Activated naive CD4-positive, alpha-beta T cell treated with anti-CD3 and anti-CD28 coated beads for 36 hours (primary cell): ENCODE measurements at regions of chr1 and their contacts with region 1.

Region 1: DNA sequence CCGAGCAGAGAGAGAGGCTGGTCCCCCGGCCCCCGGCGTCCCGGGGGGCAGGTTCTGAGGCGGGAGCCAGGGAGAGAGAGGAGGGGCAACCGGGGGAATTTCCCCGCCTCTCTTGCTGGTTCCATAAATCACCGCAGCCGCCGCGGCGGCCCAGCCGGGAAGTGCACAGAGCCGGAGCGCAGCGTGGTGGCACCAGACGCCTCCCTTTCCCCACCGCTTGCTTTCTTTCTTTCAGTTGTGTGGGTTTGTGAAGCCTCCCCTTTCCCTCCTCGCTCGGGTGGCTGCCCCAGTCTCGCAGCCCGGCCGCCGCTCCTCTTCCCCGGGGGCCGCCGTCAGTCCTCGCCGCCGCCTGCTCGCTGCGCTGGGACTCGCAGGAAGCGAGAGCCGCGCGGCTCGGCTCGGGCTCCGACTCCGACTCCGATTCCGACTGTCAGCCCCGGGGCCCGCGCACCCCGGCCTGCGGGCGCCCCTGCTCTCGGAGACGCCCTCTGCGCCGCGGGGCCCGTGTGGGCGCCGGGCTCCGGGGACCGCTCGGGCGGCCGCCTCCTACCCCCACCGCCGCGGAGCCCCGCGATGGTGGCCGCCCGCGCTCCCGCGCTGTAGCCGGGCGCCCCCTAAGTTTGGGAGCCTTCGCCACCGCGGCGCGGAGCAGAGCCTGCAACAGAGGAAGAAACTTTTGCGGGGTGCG is at the start of gene CACHD1:
- DNase-seq: peak; percentile 86
- H3K4me3 Mint-ChIP-seq: peak within 1 kb of the TSS; percentile 78
- H3K27ac Mint-ChIP-seq: peak within 1 kb of the TSS; percentile 3
- H3K4me1 Mint-ChIP-seq: peaks cover 14% of the 10 kb centered on the region
- H3K27me3 Mint-ChIP-seq: peaks cover 27% of the 10 kb centered on the region
- total RNA-seq, gene CACHD1: 2.6 to 2.9 TPM

Region 2: GRCh38 chr1:64487061-64487460 is 16.9 kb after region 1 on chr1:
- CTCF ChIA-PET with region 1: no interaction called
- intact Hi-C with region 1: loop called (anchors 2 kb)
- DNase-seq: peak; percentile 21
- H3K4me3 Mint-ChIP-seq: no peak overlapping the region
- H3K27ac Mint-ChIP-seq: no peak overlapping the region
- H3K4me1 Mint-ChIP-seq: peaks cover 28% of the 10 kb centered on the region
- H3K27me3 Mint-ChIP-seq: peaks cover 2% of the 10 kb centered on the region

Region 3: DNA sequence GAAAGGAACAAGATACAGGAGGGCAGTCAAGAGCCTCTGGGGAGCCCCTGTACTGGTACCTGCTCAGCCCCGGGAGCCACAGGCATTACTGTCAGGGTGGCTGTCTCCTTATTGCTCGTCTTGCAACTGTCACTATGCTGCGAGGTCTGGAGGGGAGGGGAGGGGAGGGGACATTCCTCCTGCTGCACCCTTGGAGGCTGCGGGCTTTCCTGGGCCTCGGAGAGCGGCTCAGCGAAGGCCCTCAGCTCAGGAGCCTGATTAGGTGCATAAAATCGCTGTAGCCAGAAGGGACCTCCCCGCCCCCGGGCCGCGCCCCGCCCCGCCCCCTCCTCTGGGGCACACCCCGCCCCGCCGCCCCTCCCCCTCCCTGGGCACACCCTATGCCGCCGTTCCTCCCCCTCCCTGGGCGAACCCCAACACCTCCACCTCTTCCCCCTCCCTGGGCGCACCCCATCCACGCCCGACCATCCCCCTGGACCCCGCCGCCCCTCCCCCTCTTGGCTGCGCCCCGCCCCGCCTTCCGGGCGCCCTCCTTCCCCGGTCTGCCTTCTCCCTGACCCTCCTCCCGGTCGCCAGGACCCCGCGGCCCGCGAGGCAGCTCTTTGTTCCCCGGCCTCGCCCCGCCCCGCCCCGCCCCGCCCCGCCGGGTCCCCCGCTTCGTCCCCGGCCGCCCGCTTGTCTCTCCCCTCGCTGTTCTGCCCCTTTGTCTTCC is 35.3 kb after region 1 on chr1:
- CTCF ChIA-PET with region 1: no interaction called
- intact Hi-C with region 1: loop called (anchors 1 kb)
- DNase-seq: peak; percentile 77
- H3K4me3 Mint-ChIP-seq: peak overlapping the region; percentile 88
- H3K27ac Mint-ChIP-seq: peak overlapping the region; percentile 77
- H3K4me1 Mint-ChIP-seq: peaks cover 29% of the 10 kb centered on the region
- H3K27me3 Mint-ChIP-seq: no peaks in the 10 kb centered on the region

Region 4: GRCh38 chr1:64539781-64540218 is 69.7 kb after region 1 on chr1:
- CTCF ChIA-PET with region 1: no interaction called
- intact Hi-C with region 1: loop called (anchors 1 kb)
- DNase-seq: peak; percentile 31
- H3K4me3 Mint-ChIP-seq: peak overlapping the region; percentile 47
- H3K27ac Mint-ChIP-seq: no peak overlapping the region
- H3K4me1 Mint-ChIP-seq: peaks cover 55% of the 10 kb centered on the region
- H3K27me3 Mint-ChIP-seq: no peaks in the 10 kb centered on the region

Region 5: DNA sequence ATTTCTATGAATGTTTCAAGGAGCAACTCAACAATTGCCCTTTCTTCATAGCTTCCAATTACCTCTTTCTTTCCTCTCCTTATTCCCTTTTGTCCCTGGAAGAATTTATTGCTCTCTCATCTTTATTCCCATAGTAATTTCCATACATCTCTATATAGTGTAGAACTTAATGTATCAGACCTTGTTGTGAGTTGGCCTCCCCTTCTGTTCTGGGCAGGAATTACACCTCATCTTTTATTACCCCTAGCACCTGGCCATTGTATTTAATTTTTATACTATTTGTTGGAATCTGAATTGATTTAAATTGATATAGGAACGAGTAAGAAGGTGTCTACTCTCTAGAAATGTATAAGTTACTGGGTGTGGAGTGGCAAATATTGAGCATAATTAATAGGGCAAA is 114.4 kb after region 1 on chr1:
- CTCF ChIA-PET with region 1: no interaction called
- intact Hi-C with region 1: loop called (anchors 1 kb)
- DNase-seq: no peak
- H3K4me3 Mint-ChIP-seq: no peak overlapping the region
- H3K27ac Mint-ChIP-seq: no peak overlapping the region
- H3K4me1 Mint-ChIP-seq: peaks cover 12% of the 10 kb centered on the region
- H3K27me3 Mint-ChIP-seq: no peaks in the 10 kb centered on the region

Region 6: DNA sequence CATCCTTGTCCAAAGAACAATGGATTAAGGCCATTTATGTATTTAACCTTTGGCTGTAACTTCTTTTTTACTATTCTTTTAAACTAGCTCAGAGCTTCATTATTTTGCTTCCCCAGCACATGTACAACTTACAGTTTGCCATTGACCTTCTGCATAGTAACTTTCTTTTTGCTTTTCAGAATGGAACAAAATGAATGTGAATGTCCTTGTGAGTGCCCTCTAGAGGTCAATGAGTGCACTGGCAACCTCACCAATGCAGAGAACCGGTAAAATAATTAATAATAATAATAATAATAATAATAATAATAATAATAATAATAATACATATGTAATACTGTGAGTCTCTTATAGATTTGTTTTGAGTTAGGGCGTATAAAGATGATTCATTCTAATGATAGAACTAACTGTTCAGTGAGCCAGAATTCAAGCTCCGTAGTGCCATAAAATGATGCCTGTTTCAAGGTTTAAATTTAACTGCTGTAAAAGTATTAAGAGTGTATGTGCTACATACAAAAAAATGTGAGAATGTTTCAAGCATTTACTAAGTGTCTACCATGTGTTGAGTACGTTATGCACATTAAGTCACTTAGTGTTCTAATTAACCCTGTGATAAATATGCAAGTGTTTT is 205.7 kb after region 1 on chr1:
- CTCF ChIA-PET with region 1: no interaction called
- intact Hi-C with region 1: loop called (anchors 2 kb)
- DNase-seq: no peak
- H3K4me3 Mint-ChIP-seq: no peak overlapping the region
- H3K27ac Mint-ChIP-seq: no peak overlapping the region
- H3K4me1 Mint-ChIP-seq: no peaks in the 10 kb centered on the region
- H3K27me3 Mint-ChIP-seq: no peaks in the 10 kb centered on the region

Region 7: GRCh38 chr1:65067491-65068201 is 597.5 kb after region 1 on chr1:
- CTCF ChIA-PET with region 1: no interaction called
- intact Hi-C with region 1: loop called (anchors 5 kb)
- DNase-seq: peak; percentile 71
- H3K4me3 Mint-ChIP-seq: peak overlapping the region; percentile 87
- H3K27ac Mint-ChIP-seq: peak overlapping the region; percentile 95
- H3K4me1 Mint-ChIP-seq: peaks cover 51% of the 10 kb centered on the region
- H3K27me3 Mint-ChIP-seq: no peaks in the 10 kb centered on the region